HCT116 (cell line): ENCODE measurements at regions of chr7 and their contacts with region 1.

Region 1: DNA sequence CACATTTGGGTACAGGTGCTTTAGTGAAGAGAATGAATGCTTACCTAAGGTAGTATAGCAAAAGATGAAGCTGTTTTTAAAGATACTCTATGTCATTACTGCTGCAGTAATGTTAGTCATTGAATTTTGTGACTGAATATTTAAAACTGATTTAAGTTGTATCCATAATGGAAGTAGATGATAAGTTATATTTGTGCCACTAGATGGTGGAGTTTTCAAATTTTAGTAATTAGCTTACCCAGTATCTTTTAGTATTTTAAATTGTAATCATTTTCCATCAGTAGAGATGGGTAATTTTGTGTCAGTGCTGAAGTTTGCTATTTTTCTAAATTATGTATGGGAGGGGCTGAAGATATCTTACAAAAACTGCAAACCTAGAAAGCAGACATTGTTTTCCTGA is 25.2 kb downstream of the HBP1 start:
- DNase-seq: no peak
- ATAC-seq: no peak
- H3K4me3 ChIP-seq: no peak overlapping the region
- H3K27ac ChIP-seq: no peak overlapping the region
- H3K4me1 ChIP-seq: no peaks in the 10 kb centered on the region
- H3K27me3 ChIP-seq: no peaks in the 10 kb centered on the region
- CTCF ChIP-seq: no peak
- POLR2A ChIP-seq: no peak
- RAD21 ChIP-seq: no peak

Region 2: GRCh38 chr7:107154826-107155225 is 39.2 kb before region 1 on chr7:
- CTCF ChIA-PET with region 1: no interaction called
- POLR2A ChIA-PET with region 1: no interaction called
- RAD21 ChIA-PET with region 1: no interaction called
- intact Hi-C with region 1: no loop called
- DNase-seq: no peak
- ATAC-seq: no peak
- H3K4me3 ChIP-seq: no peak overlapping the region
- H3K27ac ChIP-seq: no peak overlapping the region
- H3K4me1 ChIP-seq: peaks cover 0 to 4% of the 10 kb centered on the region in 2 experiments; a peak in 1 of 4 replicates
- H3K27me3 ChIP-seq: no peaks in the 10 kb centered on the region
- CTCF ChIP-seq: no peak
- POLR2A ChIP-seq: no peak
- RAD21 ChIP-seq: no peak

Region 3: GRCh38 chr7:107579885-107580715 is 386.1 kb after region 1 on chr7 and contains the start of gene BCAP29:
- CTCF ChIA-PET with region 1: no interaction called
- POLR2A ChIA-PET with region 1: no interaction called
- RAD21 ChIA-PET with region 1: no interaction called
- intact Hi-C with region 1: loop called (anchors 10 kb)
- DNase-seq: peak; percentile 38
- ATAC-seq: peak; percentile 94
- H3K4me3 ChIP-seq: peak within 1 kb of the TSS; percentile 76 to 82
- H3K27ac ChIP-seq: peak within 1 kb of the TSS; percentile 81
- H3K4me1 ChIP-seq: peaks cover 2 to 14% of the 10 kb centered on the region in 2 experiments; a peak in 3 of 4 replicates
- H3K27me3 ChIP-seq: no peaks in the 10 kb centered on the region
- CTCF ChIP-seq: peak in 1 of 3 experiments; percentile 28; a peak in 3 of 6 replicates
- POLR2A ChIP-seq: peak; percentile 47
- RAD21 ChIP-seq: peak; percentile 31; the same call in 1 of the 2 replicates
- total RNA-seq, gene BCAP29: 43.2 TPM